ENCODE measurements at regions of chr10 and their contacts with region 1.

Region 1: GRCh38 chr10:102678842-102679289 is 34.6 kb downstream of the TRIM8 start:
- DNase-seq: no peak
- H3K4me3 ChIP-seq: no peak overlapping the region
- H3K27me3 ChIP-seq: no peaks in the 10 kb centered on the region
- CTCF ChIP-seq: peak; percentile 86

Region 2: GRCh38 chr10:102645741-102646609 is 32.9 kb before region 1 on chr10:
- CTCF ChIA-PET with region 1: interaction called, 24 read pairs
- POLR2A ChIA-PET with region 1: interaction called, 11 read pairs
- DNase-seq: peak; percentile 93
- H3K4me3 ChIP-seq: peak overlapping the region; percentile 87
- H3K27me3 ChIP-seq: no peaks in the 10 kb centered on the region
- CTCF ChIP-seq: no peak

Region 3: GRCh38 chr10:102691285-102692066 is 12.6 kb after region 1 on chr10:
- CTCF ChIA-PET with region 1: interaction called, 34 read pairs
- POLR2A ChIA-PET with region 1: interaction called, 7 read pairs
- DNase-seq: no peak
- H3K4me3 ChIP-seq: no peak overlapping the region
- H3K27me3 ChIP-seq: no peaks in the 10 kb centered on the region
- CTCF ChIP-seq: no peak

Region 4: DNA sequence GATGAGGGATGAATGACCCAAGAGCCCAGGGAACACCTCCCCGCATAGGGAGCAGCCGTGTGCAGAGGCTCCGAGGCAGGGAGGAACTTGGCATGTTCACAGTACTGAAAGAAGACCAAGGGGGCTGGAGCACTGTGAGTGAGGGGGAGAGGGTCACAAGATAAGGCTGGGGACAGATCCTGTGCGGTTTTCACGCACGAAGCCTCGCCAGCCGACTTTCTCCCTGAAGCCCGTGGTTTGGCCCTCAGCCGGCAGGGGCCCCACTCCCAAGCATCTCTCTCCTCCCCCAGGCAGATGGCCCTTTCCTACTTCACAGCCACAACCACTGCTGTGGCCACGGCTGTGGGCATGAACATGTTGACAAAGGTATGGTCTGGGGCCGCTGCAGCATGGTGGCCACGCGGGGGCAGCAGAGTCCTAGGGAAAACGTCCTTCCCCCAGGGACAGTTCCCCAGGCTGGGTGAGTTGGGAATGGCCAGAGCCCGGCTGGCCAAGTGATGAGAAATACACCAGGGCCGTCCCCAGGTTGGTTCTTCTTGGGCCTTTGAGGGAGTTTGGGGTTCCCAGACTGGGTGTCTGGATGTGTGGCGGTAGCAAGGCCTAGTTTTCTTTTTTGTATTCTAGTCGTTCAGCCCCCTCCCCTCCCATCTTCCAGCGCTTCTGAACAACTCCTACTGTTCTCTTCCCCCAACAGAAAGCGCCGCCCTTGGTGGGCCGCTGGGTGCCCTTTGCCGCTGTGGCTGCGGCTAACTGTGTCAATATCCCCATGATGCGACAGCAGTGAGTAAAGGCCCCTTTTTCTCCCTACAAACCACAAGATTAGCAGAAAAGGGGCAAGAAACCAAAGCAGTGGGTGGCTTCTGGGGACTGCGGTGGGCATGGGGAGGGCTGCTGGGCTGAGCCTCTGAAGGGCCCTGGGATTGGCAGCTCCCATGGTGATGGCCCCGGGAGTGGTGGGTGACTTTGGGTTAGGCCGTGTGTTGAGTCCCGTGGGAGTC is 50.5 kb after region 1 on chr10:
- CTCF ChIA-PET with region 1: interaction called, 10 read pairs
- POLR2A ChIA-PET with region 1: no interaction called
- DNase-seq: no peak
- H3K4me3 ChIP-seq: no peak overlapping the region
- H3K27me3 ChIP-seq: no peaks in the 10 kb centered on the region
- CTCF ChIP-seq: peak; percentile 91

Region 5: DNA sequence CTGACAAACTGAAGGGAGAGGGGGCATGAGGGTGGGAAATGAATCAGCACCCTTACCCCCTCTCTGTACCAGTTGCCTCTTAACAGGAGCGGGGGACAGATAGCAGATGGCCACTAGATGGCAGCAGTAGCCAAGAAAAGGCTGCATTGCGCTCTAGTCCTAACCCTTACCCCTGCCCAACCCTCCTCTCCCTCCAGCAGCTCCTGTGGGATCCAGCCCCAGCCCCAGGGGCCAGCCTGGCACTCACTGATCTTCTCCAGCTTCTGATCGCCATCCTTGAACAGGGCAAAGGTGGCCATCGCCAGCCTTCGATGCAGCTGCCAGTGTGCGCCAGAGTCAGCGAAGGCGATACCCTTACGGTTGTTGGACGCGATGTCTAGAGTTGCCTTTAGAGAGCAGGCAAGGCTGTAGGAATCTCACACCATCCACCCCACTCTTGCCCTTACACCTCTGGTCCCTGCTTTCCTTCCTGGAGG is 156.2 kb after region 1 on chr10:
- CTCF ChIA-PET with region 1: no interaction called
- POLR2A ChIA-PET with region 1: no interaction called
- DNase-seq: no peak
- H3K4me3 ChIP-seq: no peak overlapping the region
- H3K27me3 ChIP-seq: peaks cover 4% of the 10 kb centered on the region
- CTCF ChIP-seq: peak; percentile 86

Measured in BJ (cell line).